CD4-positive, alpha-beta T cell (primary cell): ENCODE measurements at regions of chr9 and their contacts with region 1.

Region 1: GRCh38 chr9:123225374-123225813 is 43.0 kb downstream of the STRBP start:
- DNase-seq: peak in 13 of 14 experiments; percentile 3 to 77 (median 24)
- ATAC-seq: peak; percentile 94
- H3K4me3 ChIP-seq: no peak overlapping the region
- H3K4me3 Mint-ChIP-seq: no peak overlapping the region
- H3K27ac ChIP-seq: no peak overlapping the region
- H3K27ac Mint-ChIP-seq: peak overlapping the region; percentile 17
- H3K4me1 ChIP-seq: peaks cover 4% of the 10 kb centered on the region
- H3K4me1 Mint-ChIP-seq: peaks cover 21% of the 10 kb centered on the region
- H3K27me3 ChIP-seq: no peaks in the 10 kb centered on the region
- H3K27me3 Mint-ChIP-seq: no peaks in the 10 kb centered on the region
- CTCF ChIP-seq: no peak

Region 2: DNA sequence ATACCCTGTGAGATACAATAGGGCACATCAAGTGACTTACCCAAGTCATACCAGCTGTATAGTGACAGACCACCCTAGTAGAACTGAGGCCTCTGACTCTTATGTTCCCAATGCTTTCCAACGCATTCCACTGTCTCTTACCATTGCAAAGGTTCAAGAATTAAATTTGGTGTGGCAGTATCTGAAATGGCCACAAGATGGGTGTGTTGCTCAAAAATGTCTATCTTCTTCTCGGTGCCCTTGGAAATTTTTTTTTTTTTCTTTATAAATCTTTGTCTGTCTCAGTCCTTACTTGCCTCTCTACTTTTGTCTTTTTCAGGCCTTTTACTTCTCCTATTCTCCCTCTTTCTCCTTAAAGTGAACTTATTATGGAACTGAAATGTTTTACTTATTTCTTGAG is 143.6 kb before region 1 on chr9:
- CTCF ChIA-PET with region 1: interaction called, 3 read pairs
- POLR2A ChIA-PET with region 1: no interaction called
- intact Hi-C with region 1: loop called (anchors 5 to 10 kb)
- DNase-seq: peak in 4 of 14 experiments; percentile 21 to 55 (median 40)
- ATAC-seq: peak; percentile 49
- H3K4me3 ChIP-seq: no peak overlapping the region
- H3K4me3 Mint-ChIP-seq: no peak overlapping the region
- H3K27ac ChIP-seq: no peak overlapping the region
- H3K27ac Mint-ChIP-seq: no peak overlapping the region
- H3K4me1 ChIP-seq: no peaks in the 10 kb centered on the region
- H3K4me1 Mint-ChIP-seq: no peaks in the 10 kb centered on the region
- H3K27me3 ChIP-seq: no peaks in the 10 kb centered on the region
- H3K27me3 Mint-ChIP-seq: no peaks in the 10 kb centered on the region
- CTCF ChIP-seq: peak; percentile 65